ENCODE measurements at regions of chr20 and their contacts with region 1.

Region 1: GRCh38 chr20:25696384-25697131 is at the start of gene ZNF337:
- DNase-seq: peak; percentile 85 to 96 (median 90)
- ATAC-seq: peak; percentile 97
- H3K4me3 ChIP-seq: peak within 1 kb of the TSS; percentile 85
- H3K4me3 Mint-ChIP-seq: peak within 1 kb of the TSS; percentile 94
- H3K27ac ChIP-seq: peak within 1 kb of the TSS; percentile 42 to 82
- H3K27ac Mint-ChIP-seq: peak within 1 kb of the TSS; percentile 88
- H3K4me1 ChIP-seq: peaks cover 13% of the 10 kb centered on the region
- H3K4me1 Mint-ChIP-seq: peaks cover 59% of the 10 kb centered on the region
- H3K27me3 ChIP-seq: no peaks in the 10 kb centered on the region
- H3K27me3 Mint-ChIP-seq: no peaks in the 10 kb centered on the region
- CTCF ChIP-seq: no peak
- total RNA-seq, gene ZNF337: 17.9 to 18.1 TPM

Region 2: DNA sequence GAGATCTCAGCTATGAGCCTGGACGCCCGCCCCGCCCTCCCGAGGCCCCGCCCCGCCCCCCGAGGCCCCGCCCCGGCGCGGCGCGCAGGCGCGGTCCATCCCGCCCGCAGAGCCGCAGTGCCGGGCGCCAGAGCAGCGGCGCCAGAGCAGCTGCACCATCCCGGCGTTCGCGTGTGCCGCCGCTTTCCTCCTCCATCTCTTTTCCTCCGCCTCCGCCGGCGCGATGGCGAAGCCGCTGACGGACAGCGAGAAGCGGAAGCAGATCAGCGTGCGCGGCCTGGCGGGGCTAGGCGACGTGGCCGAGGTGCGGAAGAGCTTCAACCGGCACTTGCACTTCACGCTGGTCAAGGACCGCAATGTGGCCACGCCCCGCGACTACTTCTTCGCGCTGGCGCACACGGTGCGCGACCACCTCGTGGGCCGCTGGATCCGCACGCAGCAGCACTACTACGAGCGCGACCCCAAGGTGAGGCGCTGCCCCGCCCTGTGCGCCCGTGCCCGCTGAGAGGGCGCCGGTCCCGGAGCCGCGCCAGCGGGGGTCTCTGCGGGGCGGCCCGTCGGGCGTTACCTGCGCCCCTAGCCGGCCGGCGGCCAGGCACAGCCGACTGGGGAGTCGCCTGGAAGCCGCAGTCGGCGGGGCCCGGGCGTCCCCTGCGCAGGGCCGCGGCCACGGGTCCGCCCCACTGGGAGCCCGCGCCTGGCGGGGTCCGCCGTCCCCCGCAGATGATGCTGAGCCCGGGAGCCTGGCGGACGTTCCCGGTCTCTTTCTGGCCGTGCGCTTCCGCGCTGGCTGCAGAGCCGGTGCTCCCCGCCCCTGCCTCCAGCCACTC is 448.4 kb before region 1 on chr20 and contains the start of gene PYGB:
- CTCF ChIA-PET with region 1: no interaction called
- POLR2A ChIA-PET with region 1: no interaction called
- intact Hi-C with region 1: loop called (anchors 5 kb)
- DNase-seq: peak; percentile 59 to 90 (median 72)
- ATAC-seq: peak; percentile 86
- H3K4me3 ChIP-seq: peak within 1 kb of the TSS; percentile 94
- H3K4me3 Mint-ChIP-seq: peak within 1 kb of the TSS; percentile 95
- H3K27ac ChIP-seq: no peak within 1 kb of the TSS
- H3K27ac Mint-ChIP-seq: peak within 1 kb of the TSS; percentile 80
- H3K4me1 ChIP-seq: peaks cover 29% of the 10 kb centered on the region
- H3K4me1 Mint-ChIP-seq: peaks cover 56% of the 10 kb centered on the region
- H3K27me3 ChIP-seq: no peaks in the 10 kb centered on the region
- H3K27me3 Mint-ChIP-seq: peaks cover 6% of the 10 kb centered on the region
- CTCF ChIP-seq: no peak
- total RNA-seq, gene PYGB: 26.3 to 27.5 TPM

Region 3: GRCh38 chr20:25280051-25280573 is 416.4 kb before region 1 on chr20:
- CTCF ChIA-PET with region 1: no interaction called
- POLR2A ChIA-PET with region 1: no interaction called
- intact Hi-C with region 1: no loop called
- DNase-seq: peak in 1 of 14 experiments; percentile 23
- ATAC-seq: no peak
- H3K4me3 ChIP-seq: no peak overlapping the region
- H3K4me3 Mint-ChIP-seq: no peak overlapping the region
- H3K27ac ChIP-seq: no peak overlapping the region
- H3K27ac Mint-ChIP-seq: no peak overlapping the region
- H3K4me1 ChIP-seq: no peaks in the 10 kb centered on the region
- H3K4me1 Mint-ChIP-seq: peaks cover 4% of the 10 kb centered on the region
- H3K27me3 ChIP-seq: no peaks in the 10 kb centered on the region
- H3K27me3 Mint-ChIP-seq: no peaks in the 10 kb centered on the region
- CTCF ChIP-seq: no peak

Region 4: DNA sequence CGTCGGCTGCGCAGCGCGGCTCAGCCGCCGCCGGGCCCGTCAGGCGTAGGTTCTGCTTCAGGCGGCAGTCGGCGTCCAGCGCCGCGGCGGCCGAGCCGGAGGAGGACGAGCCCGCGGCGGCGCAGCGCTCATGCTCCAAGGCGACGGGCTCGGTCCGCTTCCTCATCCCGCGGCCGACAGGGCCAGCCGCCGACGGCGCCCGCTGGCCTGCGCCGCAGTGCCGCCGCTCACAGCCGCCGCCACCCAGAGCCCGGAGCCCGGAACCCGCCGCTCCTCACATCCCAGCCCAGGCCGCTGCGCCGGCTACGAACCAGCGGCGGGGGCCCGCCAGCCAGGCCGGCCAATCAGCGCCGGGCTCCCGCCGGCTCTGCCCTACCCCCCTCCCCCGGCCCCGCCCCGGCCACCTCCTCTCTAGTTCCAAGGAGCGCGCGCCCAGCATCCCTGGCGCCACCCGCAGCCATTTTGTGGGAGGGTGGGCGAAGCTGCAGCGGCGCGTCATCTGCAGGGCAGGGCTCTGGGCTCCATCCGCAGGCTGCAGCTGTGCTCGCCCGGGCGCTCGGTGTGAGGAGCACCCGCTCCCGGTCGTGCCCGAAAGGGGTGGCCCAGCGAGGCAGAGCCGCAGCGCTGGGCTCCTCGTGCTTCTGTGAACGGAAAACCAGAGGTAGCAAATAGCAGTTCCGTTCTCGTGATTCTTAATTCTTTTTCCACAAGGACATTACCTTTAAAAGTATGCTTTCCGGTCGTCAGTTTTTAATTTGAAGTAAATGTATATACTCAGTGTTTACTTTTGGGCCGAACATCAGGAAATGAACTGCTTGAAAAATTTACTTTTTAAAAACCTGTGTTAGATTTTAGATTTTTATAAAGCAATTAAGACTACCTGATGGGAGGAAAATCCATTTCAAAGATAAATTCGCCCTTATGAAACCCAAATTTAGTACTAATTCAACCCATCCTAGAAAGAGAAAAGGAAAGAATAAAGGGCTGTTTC is 305.7 kb before region 1 on chr20 and contains the start of gene ABHD12:
- CTCF ChIA-PET with region 1: no interaction called
- POLR2A ChIA-PET with region 1: no interaction called
- intact Hi-C with region 1: loop called in 1 of 2 experiments (anchors 5 kb)
- DNase-seq: peak; percentile 86 to 97 (median 92)
- ATAC-seq: peak; percentile 89
- H3K4me3 ChIP-seq: peak within 1 kb of the TSS; percentile 75
- H3K4me3 Mint-ChIP-seq: peak within 1 kb of the TSS; percentile 92
- H3K27ac ChIP-seq: peak within 1 kb of the TSS in 1 of 2 donors; percentile 42
- H3K27ac Mint-ChIP-seq: peak within 1 kb of the TSS; percentile 84
- H3K4me1 ChIP-seq: peaks cover 10% of the 10 kb centered on the region
- H3K4me1 Mint-ChIP-seq: peaks cover 23% of the 10 kb centered on the region
- H3K27me3 ChIP-seq: no peaks in the 10 kb centered on the region
- H3K27me3 Mint-ChIP-seq: no peaks in the 10 kb centered on the region
- CTCF ChIP-seq: no peak
- total RNA-seq, gene ABHD12: 13.4 to 17.0 TPM

Region 5: GRCh38 chr20:25407311-25408169 is 289.0 kb before region 1 on chr20 and contains the start of gene GINS1:
- CTCF ChIA-PET with region 1: no interaction called
- POLR2A ChIA-PET with region 1: no interaction called
- intact Hi-C with region 1: loop called in 1 of 2 experiments (anchors 5 kb)
- DNase-seq: peak; percentile 40 to 83 (median 58)
- ATAC-seq: peak; percentile 88
- H3K4me3 ChIP-seq: peak within 1 kb of the TSS; percentile 76
- H3K4me3 Mint-ChIP-seq: peak within 1 kb of the TSS; percentile 95
- H3K27ac ChIP-seq: no peak within 1 kb of the TSS
- H3K27ac Mint-ChIP-seq: peak within 1 kb of the TSS; percentile 78
- H3K4me1 ChIP-seq: peaks cover 11% of the 10 kb centered on the region
- H3K4me1 Mint-ChIP-seq: peaks cover 13% of the 10 kb centered on the region
- H3K27me3 ChIP-seq: no peaks in the 10 kb centered on the region
- H3K27me3 Mint-ChIP-seq: no peaks in the 10 kb centered on the region
- CTCF ChIP-seq: no peak
- total RNA-seq, gene GINS1: 0.08 to 0.17 TPM

Region 6: DNA sequence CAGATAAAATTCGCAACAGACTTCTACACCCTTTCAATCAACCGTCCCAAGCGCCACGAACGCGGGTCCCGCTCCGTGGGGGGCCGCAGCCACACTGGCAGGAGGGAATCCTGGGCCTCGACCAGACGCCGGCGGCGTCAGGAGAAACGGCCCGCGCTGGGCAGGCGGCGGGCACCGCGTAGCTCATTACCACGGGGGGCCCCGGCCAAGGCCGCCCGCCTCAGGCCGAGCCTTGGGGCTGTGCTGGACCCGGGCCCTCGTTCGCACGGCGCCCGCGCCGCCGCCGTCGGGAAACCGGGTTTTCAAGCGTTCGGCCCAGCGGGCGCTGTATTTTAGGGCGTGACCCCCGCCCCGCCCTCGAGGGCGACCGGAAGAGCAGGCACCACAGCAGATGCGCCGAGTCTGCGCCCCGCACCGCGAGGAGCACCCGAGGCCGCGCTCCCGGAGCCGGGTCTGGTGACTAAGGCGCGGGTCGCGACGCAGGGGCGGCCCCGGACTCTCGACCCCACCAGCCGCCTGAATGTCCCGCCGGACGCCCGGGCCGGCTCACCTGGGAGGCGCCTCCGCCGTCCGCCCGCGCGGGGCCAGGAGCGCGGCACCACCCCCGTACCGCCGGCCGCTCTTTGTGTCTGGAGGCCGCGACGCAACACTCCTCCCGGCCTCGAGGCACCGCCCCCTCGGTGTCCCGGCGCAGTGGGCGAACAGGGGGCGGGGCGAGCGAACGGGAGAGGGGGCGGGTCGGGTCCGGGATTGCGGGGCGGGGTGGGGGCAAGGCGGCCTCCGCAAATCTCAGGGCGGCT is 111.5 kb before region 1 on chr20 and contains the start of gene NINL:
- CTCF ChIA-PET with region 1: no interaction called
- POLR2A ChIA-PET with region 1: no interaction called
- intact Hi-C with region 1: loop called in 1 of 2 experiments (anchors 5 kb)
- DNase-seq: peak; percentile 4 to 69 (median 38)
- ATAC-seq: peak; percentile 89
- H3K4me3 ChIP-seq: peak within 1 kb of the TSS; percentile 34
- H3K4me3 Mint-ChIP-seq: peak within 1 kb of the TSS; percentile 84
- H3K27ac ChIP-seq: no peak within 1 kb of the TSS
- H3K27ac Mint-ChIP-seq: peak within 1 kb of the TSS; percentile 53
- H3K4me1 ChIP-seq: peaks cover 7% of the 10 kb centered on the region
- H3K4me1 Mint-ChIP-seq: peaks cover 10% of the 10 kb centered on the region
- H3K27me3 ChIP-seq: no peaks in the 10 kb centered on the region
- H3K27me3 Mint-ChIP-seq: peaks cover 8% of the 10 kb centered on the region
- CTCF ChIP-seq: no peak
- total RNA-seq, gene NINL: 2.7 to 4.0 TPM

Region 7: DNA sequence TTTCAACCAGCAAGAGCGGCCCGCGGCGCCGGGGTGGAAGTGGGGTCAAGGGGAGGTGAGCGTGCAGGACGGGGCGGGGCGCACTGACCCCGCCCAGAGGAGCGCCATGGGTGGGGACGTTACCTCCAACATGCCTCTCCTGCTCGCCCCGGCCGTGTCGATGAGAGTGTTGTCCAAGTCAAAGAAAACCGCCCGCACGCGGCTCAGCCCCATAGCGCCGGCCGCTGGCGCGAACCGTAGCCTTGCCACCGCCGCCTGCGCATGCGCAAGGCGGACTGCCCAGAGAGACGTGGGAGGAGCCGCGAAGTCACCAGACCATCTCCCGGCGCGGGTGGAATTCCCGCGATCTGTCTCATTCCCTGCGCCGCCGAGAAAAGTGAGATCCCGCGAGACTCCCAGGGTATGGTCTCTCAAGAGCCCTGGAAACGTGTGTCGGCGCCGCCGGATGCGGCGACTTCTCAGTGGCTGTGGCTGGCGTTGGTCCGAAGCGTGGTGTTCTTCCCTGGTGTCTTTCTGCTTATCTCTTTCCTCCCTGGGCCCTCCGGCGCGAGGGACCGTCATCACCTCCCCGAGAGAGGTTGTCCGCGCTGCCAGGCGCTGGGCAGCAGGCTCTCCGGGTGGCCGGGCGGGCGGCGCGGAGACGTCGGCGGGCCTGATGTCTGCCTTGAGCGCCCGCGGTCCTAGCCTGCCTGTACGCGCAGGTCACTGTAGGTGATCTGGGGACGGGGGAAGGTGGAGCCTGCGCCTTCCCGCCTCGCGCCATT is 72.6 kb before region 1 on chr20 and contains the start of gene NANP:
- CTCF ChIA-PET with region 1: no interaction called
- POLR2A ChIA-PET with region 1: no interaction called
- intact Hi-C with region 1: loop called in 1 of 2 experiments (anchors 2 kb)
- DNase-seq: peak; percentile 56 to 95 (median 73)
- ATAC-seq: peak; percentile 76
- H3K4me3 ChIP-seq: peak within 1 kb of the TSS; percentile 69
- H3K4me3 Mint-ChIP-seq: peak within 1 kb of the TSS; percentile 96
- H3K27ac ChIP-seq: peak within 1 kb of the TSS in 1 of 2 donors; percentile 21
- H3K27ac Mint-ChIP-seq: peak within 1 kb of the TSS; percentile 88
- H3K4me1 ChIP-seq: peaks cover 19% of the 10 kb centered on the region
- H3K4me1 Mint-ChIP-seq: peaks cover 22% of the 10 kb centered on the region
- H3K27me3 ChIP-seq: no peaks in the 10 kb centered on the region
- H3K27me3 Mint-ChIP-seq: no peaks in the 10 kb centered on the region
- CTCF ChIP-seq: no peak
- total RNA-seq, gene NANP: 1.1 to 1.2 TPM

Region 8: DNA sequence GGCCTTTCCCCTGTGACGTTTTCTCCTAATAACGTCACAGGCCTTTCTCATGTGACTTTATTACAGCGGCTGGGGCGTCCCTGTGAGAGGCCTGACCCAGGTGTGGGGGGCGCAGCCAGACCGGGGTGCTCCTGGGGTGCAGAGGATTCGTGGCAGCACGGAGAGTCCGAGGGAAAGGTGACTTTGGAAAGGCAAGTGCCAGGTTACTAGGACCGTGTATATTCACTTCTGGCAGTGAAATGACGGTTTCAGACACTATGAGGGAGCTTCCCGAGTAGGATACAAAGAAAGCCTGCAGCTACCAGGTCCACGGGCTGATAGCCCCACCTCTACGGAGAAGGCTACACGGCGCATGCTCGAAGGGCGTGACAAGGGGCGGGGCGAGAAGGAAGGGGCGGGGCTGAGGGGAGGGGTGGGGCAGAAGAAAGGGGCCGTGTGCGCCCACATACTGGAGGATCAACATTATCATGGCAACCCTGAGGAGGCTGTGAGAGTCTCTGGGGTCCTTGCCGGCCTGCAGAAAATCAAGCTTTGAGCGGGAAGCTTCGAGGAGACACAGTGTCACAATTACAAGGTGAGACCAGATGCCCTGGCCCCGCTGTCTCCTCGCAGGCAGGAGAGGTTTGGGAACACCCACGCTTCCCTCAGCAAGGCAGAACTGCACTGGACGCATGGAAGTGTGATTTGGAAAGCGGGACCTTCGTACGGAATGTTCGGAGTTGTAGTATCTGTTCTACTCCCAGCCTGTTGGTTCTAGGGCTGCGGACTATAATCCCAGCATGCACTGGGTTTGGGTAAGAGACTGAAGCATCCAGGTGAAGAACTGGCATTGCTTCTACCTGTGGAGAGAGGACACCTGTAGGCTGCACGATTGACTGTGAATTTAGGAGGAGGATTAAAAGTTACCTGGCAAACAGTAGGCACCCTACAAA is 54.5 kb after region 1 on chr20:
- CTCF ChIA-PET with region 1: no interaction called
- POLR2A ChIA-PET with region 1: no interaction called
- intact Hi-C with region 1: loop called (anchors 1 to 2 kb)
- DNase-seq: peak; percentile 45 to 80 (median 56)
- ATAC-seq: peak; percentile 97
- H3K4me3 ChIP-seq: peak overlapping the region; percentile 56
- H3K4me3 Mint-ChIP-seq: peak overlapping the region; percentile 93
- H3K27ac ChIP-seq: no peak overlapping the region
- H3K27ac Mint-ChIP-seq: peak overlapping the region; percentile 82
- H3K4me1 ChIP-seq: peaks cover 17% of the 10 kb centered on the region
- H3K4me1 Mint-ChIP-seq: peaks cover 15% of the 10 kb centered on the region
- H3K27me3 ChIP-seq: no peaks in the 10 kb centered on the region
- H3K27me3 Mint-ChIP-seq: no peaks in the 10 kb centered on the region
- CTCF ChIP-seq: no peak